CD8-positive, alpha-beta memory T cell (primary cell): ENCODE measurements at regions of chr19 and their contacts with region 1.

Region 1: GRCh38 chr19:10106100-10106936 is at the start of gene PPAN:
- DNase-seq: peak; percentile 95 to 99 (median 96)
- H3K4me3 ChIP-seq: peak within 1 kb of the TSS; percentile 63
- H3K4me3 Mint-ChIP-seq: peak within 1 kb of the TSS; percentile 78 to 91 (median 84)
- H3K27ac ChIP-seq: peak within 1 kb of the TSS; percentile 91
- H3K27ac Mint-ChIP-seq: peak within 1 kb of the TSS; percentile 93 to 99 (median 98)
- H3K4me1 ChIP-seq: peaks cover 65% of the 10 kb centered on the region
- H3K4me1 Mint-ChIP-seq: peaks cover 50 to 82% (median 62%) of the 10 kb centered on the region in 3 donors
- H3K27me3 ChIP-seq: no peaks in the 10 kb centered on the region
- H3K27me3 Mint-ChIP-seq: peaks cover 0 to 2% of the 10 kb centered on the region in 2 donors
- total RNA-seq, gene PPAN: 273 to 284 TPM

Region 2: DNA sequence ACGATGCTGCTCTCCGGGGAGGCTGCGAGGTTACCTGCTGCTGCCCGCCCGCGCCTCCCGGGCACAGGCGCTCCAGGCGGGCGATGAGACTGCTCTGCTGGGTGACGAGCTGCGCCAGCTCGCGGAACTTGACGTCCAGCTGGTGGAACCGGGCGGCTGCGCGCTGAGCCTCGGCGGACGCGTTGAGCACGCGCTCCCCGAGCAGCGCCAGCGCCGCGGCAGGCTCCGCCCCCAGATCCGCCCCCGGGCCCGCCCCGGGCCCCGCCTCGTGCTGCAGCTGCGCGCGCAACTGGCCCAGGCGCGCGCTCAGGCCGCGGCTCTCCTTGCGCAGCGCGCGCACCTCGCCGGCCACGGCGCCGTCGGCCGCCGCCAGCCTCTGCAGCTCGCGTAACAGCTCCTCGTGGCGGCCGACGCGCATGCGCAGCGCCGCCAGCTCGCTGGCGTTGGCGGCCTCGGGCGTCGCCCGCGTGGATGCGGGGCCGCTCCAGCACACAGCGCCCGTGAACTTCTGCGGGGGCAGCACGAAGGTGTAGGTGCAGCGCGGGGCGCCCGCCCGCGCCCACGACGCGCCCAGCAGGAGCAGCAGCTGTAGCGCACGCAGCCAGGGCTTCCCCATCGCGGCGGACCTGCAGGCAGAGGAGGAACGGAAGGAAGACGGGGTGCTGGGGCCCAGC is 10.2 kb before region 1 on chr19:
- CTCF ChIA-PET with region 1: interaction called, 194 read pairs
- POLR2A ChIA-PET with region 1: interaction called, 36 read pairs
- DNase-seq: peak; percentile 85 to 94 (median 89)
- H3K4me3 ChIP-seq: peak overlapping the region; percentile 60
- H3K4me3 Mint-ChIP-seq: peak overlapping the region in 5 of 7 donors; percentile 37 to 72 (median 60)
- H3K27ac ChIP-seq: peak overlapping the region; percentile 67
- H3K27ac Mint-ChIP-seq: peak overlapping the region in 7 of 8 donors; percentile 47 to 79 (median 66)
- H3K4me1 ChIP-seq: peaks cover 28% of the 10 kb centered on the region
- H3K4me1 Mint-ChIP-seq: peaks cover 27 to 47% (median 29%) of the 10 kb centered on the region in 3 donors
- H3K27me3 ChIP-seq: no peaks in the 10 kb centered on the region
- H3K27me3 Mint-ChIP-seq: no peaks in the 10 kb centered on the region

Region 3: GRCh38 chr19:10135551-10136334 is 29.4 kb after region 1 on chr19:
- CTCF ChIA-PET with region 1: no interaction called
- POLR2A ChIA-PET with region 1: no interaction called
- DNase-seq: no peak
- H3K4me3 ChIP-seq: no peak overlapping the region
- H3K4me3 Mint-ChIP-seq: no peak overlapping the region
- H3K27ac ChIP-seq: no peak overlapping the region
- H3K27ac Mint-ChIP-seq: peak overlapping the region in 1 of 8 donors; percentile 79
- H3K4me1 ChIP-seq: peaks cover 13% of the 10 kb centered on the region
- H3K4me1 Mint-ChIP-seq: peaks cover 2 to 13% (median 3%) of the 10 kb centered on the region in 3 donors
- H3K27me3 ChIP-seq: no peaks in the 10 kb centered on the region
- H3K27me3 Mint-ChIP-seq: no peaks in the 10 kb centered on the region

Region 4: GRCh38 chr19:10316229-10317044 is 210.1 kb after region 1 on chr19:
- CTCF ChIA-PET with region 1: no interaction called
- POLR2A ChIA-PET with region 1: no interaction called
- DNase-seq: no peak
- H3K4me3 ChIP-seq: peak overlapping the region; percentile 74
- H3K4me3 Mint-ChIP-seq: peak overlapping the region; percentile 43 to 94 (median 87)
- H3K27ac ChIP-seq: peak overlapping the region; percentile 27
- H3K27ac Mint-ChIP-seq: peak overlapping the region; percentile 47 to 95 (median 88)
- H3K4me1 ChIP-seq: peaks cover 4% of the 10 kb centered on the region
- H3K4me1 Mint-ChIP-seq: peaks cover 12 to 20% (median 19%) of the 10 kb centered on the region in 3 donors
- H3K27me3 ChIP-seq: no peaks in the 10 kb centered on the region
- H3K27me3 Mint-ChIP-seq: no peaks in the 10 kb centered on the region